Endothelial cell of umbilical vein (primary cell): ENCODE measurements at regions of chr14 and their contacts with region 1.

Region 1: DNA sequence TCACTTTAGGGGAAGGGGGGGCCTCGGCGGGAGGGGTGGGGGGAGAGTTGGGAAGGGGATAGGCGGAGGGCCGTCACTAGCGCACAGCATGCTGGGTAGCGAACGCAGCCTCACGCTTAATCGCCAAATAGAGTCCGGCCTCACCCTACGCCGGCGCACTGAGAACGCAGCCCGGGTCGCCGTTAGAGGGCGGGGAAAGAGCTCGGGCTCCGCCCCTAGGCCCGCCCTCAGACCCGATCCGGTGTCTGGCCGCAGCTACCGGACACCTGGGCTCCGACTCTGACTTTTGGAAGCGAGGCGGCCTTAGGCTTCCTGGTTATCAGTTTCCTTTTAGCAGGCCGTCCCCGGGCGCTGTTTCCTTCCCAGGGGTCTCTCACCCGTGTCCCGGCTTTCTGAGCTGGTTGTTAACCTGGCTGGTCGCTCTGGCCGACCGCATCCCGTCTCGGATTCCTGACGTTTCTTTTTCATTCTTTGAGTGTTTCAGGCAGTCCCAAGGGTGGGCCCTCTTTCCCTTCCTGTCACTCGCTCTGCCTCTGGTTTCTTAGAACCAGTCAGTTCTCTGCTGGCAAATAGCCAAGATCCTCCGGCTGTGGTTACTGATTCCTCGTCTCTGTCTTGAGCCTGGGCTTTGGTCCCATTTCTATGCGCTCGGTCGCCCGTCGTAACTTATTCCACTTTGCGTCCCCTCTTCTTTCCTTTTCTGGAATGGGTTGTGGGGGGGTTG is 378 bp upstream of the STRN3 start:
- DNase-seq: peak; percentile 97
- H3K4me3 ChIP-seq: peak overlapping the region; percentile 89 to 99 (median 96)
- H3K27ac ChIP-seq: peak overlapping the region; percentile 95
- H3K4me1 ChIP-seq: peaks cover 22% of the 10 kb centered on the region
- H3K27me3 ChIP-seq: no peaks in the 10 kb centered on the region
- CTCF ChIP-seq: no peak
- POLR2A ChIP-seq: peak; percentile 93

Region 2: DNA sequence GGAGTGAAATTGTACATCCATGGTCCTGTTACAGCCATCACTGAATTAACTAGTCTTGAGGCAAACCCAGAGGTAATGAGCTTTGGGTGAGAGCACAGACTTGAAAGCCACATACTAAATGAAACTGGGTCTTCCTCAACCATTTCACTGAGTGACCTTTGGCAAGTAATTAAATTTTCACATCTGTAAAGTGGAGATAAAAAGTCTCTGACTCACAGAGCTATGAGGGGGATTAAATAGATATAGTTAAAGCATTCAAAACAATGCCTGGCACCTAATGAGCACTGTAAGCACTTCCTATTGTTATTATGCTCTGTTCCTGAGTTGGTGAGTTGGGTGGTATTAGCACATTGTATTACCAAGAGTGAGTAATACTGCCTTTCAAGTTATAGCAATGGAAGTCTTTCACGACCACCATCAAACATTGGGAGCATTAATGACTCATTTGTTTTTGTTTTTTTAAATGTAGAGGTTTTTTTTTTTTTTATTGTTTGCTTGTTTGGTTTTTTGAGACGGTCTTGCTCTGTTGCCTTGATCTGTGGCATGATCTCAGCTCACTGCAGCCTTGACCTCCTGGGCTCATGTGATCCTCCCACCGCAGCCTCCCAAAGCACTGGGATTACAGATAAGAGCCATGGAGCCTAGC is 12.1 kb after region 1 on chr14:
- CTCF ChIA-PET with region 1: interaction called, 21 read pairs
- POLR2A ChIA-PET with region 1: interaction called, 26 read pairs
- dilution Hi-C with region 1: no loop called
- intact Hi-C with region 1: loop called (anchors 1 kb)
- DNase-seq: peak; percentile 96
- H3K4me3 ChIP-seq: no peak overlapping the region
- H3K27ac ChIP-seq: peak overlapping the region; percentile 21
- H3K4me1 ChIP-seq: peaks cover 18% of the 10 kb centered on the region
- H3K27me3 ChIP-seq: no peaks in the 10 kb centered on the region
- CTCF ChIP-seq: no peak
- POLR2A ChIP-seq: no peak

Region 3: GRCh38 chr14:31084385-31084784 is 57.8 kb after region 1 on chr14:
- CTCF ChIA-PET with region 1: interaction called, 9 read pairs
- POLR2A ChIA-PET with region 1: no interaction called
- dilution Hi-C with region 1: no loop called
- intact Hi-C with region 1: loop called (anchors 1 kb)
- DNase-seq: no peak
- H3K4me3 ChIP-seq: no peak overlapping the region
- H3K27ac ChIP-seq: no peak overlapping the region
- H3K4me1 ChIP-seq: no peaks in the 10 kb centered on the region
- H3K27me3 ChIP-seq: no peaks in the 10 kb centered on the region
- CTCF ChIP-seq: no peak
- POLR2A ChIP-seq: no peak

Region 4: DNA sequence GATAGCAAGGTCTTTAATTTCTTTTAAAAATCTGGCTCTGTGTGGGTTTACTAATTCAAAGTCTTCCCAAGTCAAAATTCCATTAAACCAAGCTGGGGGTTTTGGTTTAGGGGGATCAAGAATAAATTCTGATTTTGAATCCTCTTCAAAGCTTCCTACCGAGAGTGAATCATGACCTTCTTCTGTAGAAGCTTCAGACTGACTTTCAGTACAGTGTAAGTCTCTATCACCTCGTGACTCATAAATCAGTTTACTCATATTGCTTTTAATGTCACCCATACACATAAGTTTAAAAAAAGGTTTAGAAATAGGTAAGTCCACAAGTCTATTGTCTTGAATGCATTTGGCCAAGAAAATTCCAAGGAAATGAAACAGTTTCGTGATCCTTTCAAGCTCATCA is 80.2 kb after region 1 on chr14:
- CTCF ChIA-PET with region 1: no interaction called
- POLR2A ChIA-PET with region 1: no interaction called
- dilution Hi-C with region 1: no loop called
- intact Hi-C with region 1: no loop called
- DNase-seq: no peak
- H3K4me3 ChIP-seq: no peak overlapping the region
- H3K27ac ChIP-seq: no peak overlapping the region
- H3K4me1 ChIP-seq: no peaks in the 10 kb centered on the region
- H3K27me3 ChIP-seq: no peaks in the 10 kb centered on the region
- CTCF ChIP-seq: no peak
- POLR2A ChIP-seq: no peak